ENCODE measurements at regions of chr3 and their contacts with region 1.

Region 1: DNA sequence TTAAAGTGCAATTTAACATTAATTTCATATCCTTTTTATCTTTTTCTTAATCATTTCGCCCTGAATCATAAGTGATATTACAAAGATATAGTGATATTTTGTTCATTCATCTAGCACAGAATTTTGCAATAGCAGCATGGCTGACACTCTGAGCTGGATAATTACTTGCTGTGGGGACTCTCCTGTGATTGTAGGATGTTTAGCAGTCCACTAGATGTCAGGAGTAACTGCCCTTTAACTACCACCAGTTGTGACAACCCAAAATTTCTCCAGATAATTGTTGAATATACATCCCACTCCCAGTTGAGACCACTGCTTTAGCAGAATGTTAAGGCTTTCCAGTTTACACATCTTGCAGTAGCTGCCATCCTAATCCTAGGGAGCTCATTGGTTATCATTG is 196.8 kb upstream of the MBNL1 start:
- DNase-seq: no peak
- ATAC-seq: peak; percentile 83
- H3K4me3 ChIP-seq: no peak overlapping the region
- H3K27ac ChIP-seq: no peak overlapping the region
- H3K4me1 ChIP-seq: no peaks in the 10 kb centered on the region
- H3K27me3 ChIP-seq: no peaks in the 10 kb centered on the region
- CTCF ChIP-seq: peak; percentile 71

Region 2: GRCh38 chr3:152127058-152127457 is 55.1 kb after region 1 on chr3:
- CTCF ChIA-PET with region 1: no interaction called
- POLR2A ChIA-PET with region 1: no interaction called
- in situ Hi-C with region 1: no loop called
- intact Hi-C with region 1: loop called (anchors 10 kb)
- DNase-seq: no peak
- ATAC-seq: no peak
- H3K4me3 ChIP-seq: no peak overlapping the region
- H3K27ac ChIP-seq: no peak overlapping the region
- H3K4me1 ChIP-seq: no peaks in the 10 kb centered on the region
- H3K27me3 ChIP-seq: no peaks in the 10 kb centered on the region
- CTCF ChIP-seq: no peak

Region 3: GRCh38 chr3:152327203-152327602 is 255.3 kb after region 1 on chr3:
- CTCF ChIA-PET with region 1: no interaction called
- POLR2A ChIA-PET with region 1: no interaction called
- in situ Hi-C with region 1: no loop called
- intact Hi-C with region 1: no loop called
- DNase-seq: no peak
- ATAC-seq: no peak
- H3K4me3 ChIP-seq: no peak overlapping the region
- H3K27ac ChIP-seq: no peak overlapping the region
- H3K4me1 ChIP-seq: peaks cover 34% of the 10 kb centered on the region
- H3K27me3 ChIP-seq: no peaks in the 10 kb centered on the region
- CTCF ChIP-seq: no peak

Measured in Panc1 (cell line).